KBM-7 (cell line): ENCODE measurements at regions of chr10 and their contacts with region 1.

Region 1: DNA sequence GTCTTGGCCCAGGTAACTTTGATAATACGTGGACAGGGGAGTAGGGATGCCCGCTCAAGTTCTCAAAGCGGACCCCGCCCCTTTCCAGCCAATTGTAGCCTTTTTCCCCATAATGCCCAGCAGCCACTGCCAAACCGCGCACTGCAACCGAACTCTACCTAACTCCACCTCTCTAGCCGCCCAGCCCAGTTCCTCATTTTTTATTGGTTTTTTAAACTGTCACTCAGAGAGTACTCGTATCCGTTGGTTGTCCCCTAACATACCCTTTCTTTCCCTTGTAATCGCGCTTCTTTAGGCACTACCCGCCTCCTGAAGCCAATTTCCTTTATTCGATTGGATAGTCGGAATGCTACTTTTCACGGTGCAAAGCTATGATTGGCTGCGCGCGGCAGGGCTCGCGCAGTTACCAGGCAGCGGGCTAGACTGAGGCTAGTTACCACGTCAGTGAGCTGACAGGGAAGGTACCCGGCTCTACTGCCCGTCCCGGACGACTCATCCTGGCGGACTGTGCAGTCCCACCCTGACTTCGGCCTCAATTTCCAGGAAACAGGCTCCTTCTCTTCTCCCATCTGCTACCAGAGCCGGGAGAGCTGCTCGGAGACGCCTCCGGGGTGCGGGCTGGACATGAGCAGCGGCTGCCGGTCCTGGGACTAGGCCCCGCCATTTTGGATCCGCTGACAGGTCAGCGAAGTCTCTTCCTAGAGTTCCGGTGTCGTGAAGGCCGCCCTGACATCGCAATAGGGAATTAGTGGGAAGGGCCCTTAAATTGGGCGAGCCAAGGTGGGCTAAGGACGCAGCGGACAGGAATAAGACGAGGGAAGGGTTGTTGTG is at the start of gene GBF1:
- DNase-seq: peak; percentile 100

Region 2: GRCh38 chr10:102064868-102065560 is 180.3 kb before region 1 on chr10 and contains the start of gene HPS6:
- in situ Hi-C with region 1: no loop called
- DNase-seq: peak; percentile 95

Region 3: GRCh38 chr10:102492983-102493382 is 247.7 kb after region 1 on chr10:
- in situ Hi-C with region 1: loop called (anchors 25 kb)
- DNase-seq: no peak